CD8-positive, alpha-beta T cell (primary cell): ENCODE measurements at regions of chr4 and their contacts with region 1.

Region 1: GRCh38 chr4:116143198-116143597 is 942.2 kb downstream of the TRAM1L1 start:
- DNase-seq: no peak
- ATAC-seq: no peak
- H3K4me3 ChIP-seq: no peak overlapping the region
- H3K4me3 Mint-ChIP-seq: no peak overlapping the region
- H3K27ac ChIP-seq: no peak overlapping the region
- H3K27ac Mint-ChIP-seq: no peak overlapping the region
- H3K4me1 ChIP-seq: no peaks in the 10 kb centered on the region
- H3K4me1 Mint-ChIP-seq: no peaks in the 10 kb centered on the region
- H3K27me3 ChIP-seq: no peaks in the 10 kb centered on the region
- H3K27me3 Mint-ChIP-seq: no peaks in the 10 kb centered on the region
- CTCF ChIP-seq: no peak

Region 2: DNA sequence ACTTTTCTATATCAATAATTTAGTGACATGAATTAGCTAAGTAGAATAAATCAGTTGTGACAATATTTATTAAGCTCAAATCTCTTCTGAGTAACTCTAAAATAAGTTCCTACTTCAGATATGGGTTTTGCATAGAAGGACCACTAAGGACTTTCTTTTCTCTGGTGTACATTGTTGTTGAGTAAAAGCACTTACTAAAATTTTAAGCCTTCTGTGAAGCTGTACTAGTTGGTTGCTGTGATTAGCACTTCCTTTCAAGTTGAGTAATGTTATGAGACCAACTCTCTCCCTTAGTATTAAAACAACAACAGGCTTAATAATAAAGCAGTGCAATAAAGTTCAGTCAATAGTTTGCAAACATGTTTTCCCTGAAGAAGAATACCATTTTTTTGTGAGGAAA is 362.4 kb before region 1 on chr4:
- CTCF ChIA-PET with region 1: no interaction called
- POLR2A ChIA-PET with region 1: no interaction called
- intact Hi-C with region 1: no loop called
- DNase-seq: no peak
- ATAC-seq: no peak
- H3K4me3 ChIP-seq: no peak overlapping the region
- H3K4me3 Mint-ChIP-seq: no peak overlapping the region
- H3K27ac ChIP-seq: no peak overlapping the region
- H3K27ac Mint-ChIP-seq: no peak overlapping the region
- H3K4me1 ChIP-seq: no peaks in the 10 kb centered on the region
- H3K4me1 Mint-ChIP-seq: no peaks in the 10 kb centered on the region
- H3K27me3 ChIP-seq: no peaks in the 10 kb centered on the region
- H3K27me3 Mint-ChIP-seq: no peaks in the 10 kb centered on the region
- CTCF ChIP-seq: no peak

Region 3: DNA sequence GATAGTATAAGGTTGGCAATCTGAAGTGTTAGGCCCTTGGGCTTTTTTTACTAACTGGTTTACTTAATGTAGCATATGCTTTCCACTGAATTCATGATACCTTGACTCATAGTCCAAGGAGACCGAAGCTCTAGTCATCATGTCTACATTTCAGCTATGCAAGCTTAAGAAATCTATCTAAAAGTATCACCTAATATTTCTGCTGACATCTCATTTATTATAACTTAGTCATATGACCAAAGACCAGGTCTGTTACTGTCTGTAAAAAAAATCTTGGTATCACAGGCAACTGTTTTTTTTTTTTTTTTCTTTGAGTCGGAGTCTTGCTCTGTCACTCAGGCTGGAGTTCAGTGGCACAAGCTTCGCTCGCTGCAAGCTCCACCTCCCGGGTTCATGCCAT is 215.8 kb before region 1 on chr4:
- CTCF ChIA-PET with region 1: no interaction called
- POLR2A ChIA-PET with region 1: no interaction called
- intact Hi-C with region 1: no loop called
- DNase-seq: no peak
- ATAC-seq: no peak
- H3K4me3 ChIP-seq: no peak overlapping the region
- H3K4me3 Mint-ChIP-seq: no peak overlapping the region
- H3K27ac ChIP-seq: no peak overlapping the region
- H3K27ac Mint-ChIP-seq: no peak overlapping the region
- H3K4me1 ChIP-seq: no peaks in the 10 kb centered on the region
- H3K4me1 Mint-ChIP-seq: no peaks in the 10 kb centered on the region
- H3K27me3 ChIP-seq: no peaks in the 10 kb centered on the region
- H3K27me3 Mint-ChIP-seq: no peaks in the 10 kb centered on the region
- CTCF ChIP-seq: no peak

Region 4: GRCh38 chr4:116233971-116234370 is 90.8 kb after region 1 on chr4:
- CTCF ChIA-PET with region 1: no interaction called
- POLR2A ChIA-PET with region 1: no interaction called
- intact Hi-C with region 1: loop called in 1 of 2 experiments (anchors 5 kb)
- DNase-seq: no peak
- ATAC-seq: no peak
- H3K4me3 ChIP-seq: no peak overlapping the region
- H3K4me3 Mint-ChIP-seq: no peak overlapping the region
- H3K27ac ChIP-seq: no peak overlapping the region
- H3K27ac Mint-ChIP-seq: no peak overlapping the region
- H3K4me1 ChIP-seq: no peaks in the 10 kb centered on the region
- H3K4me1 Mint-ChIP-seq: no peaks in the 10 kb centered on the region
- H3K27me3 ChIP-seq: no peaks in the 10 kb centered on the region
- H3K27me3 Mint-ChIP-seq: no peaks in the 10 kb centered on the region
- CTCF ChIP-seq: no peak